PC-3 (cell line): ENCODE measurements at regions of chr5 and their contacts with region 1.

Region 1: DNA sequence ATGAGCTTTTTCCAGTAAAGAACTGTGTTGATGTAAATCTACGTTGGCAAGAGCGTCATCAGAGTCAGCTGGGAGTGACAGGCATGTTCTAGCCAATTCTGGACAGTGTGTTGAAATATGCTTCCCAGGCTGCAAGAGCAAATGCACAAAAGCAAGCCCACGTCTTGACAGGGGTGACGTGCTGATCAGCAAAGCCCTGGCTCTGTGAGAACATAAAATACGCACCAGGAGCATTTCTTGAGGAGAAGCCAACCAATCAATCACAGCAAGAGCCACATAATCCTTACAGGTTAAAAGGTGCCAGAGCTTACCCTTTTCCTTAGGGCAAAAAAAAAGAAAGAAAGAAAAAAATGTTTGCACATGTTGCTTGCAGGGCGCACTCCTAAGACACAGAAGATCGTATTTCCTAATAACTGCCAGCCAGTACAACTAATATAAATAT is 148.1 kb downstream of the PDE4D start:
- DNase-seq: peak; percentile 61
- ATAC-seq: peak; percentile 44
- H3K4me3 ChIP-seq: peak overlapping the region; percentile 48; the same call in 1 of the 2 replicates
- H3K27ac ChIP-seq: peak overlapping the region; percentile 99
- H3K4me1 ChIP-seq: peaks cover 37% of the 10 kb centered on the region
- H3K27me3 ChIP-seq: no peaks in the 10 kb centered on the region
- CTCF ChIP-seq: no peak

Region 2: GRCh38 chr5:59615272-59615671 is 130.2 kb before region 1 on chr5:
- CTCF ChIA-PET with region 1: interaction called, 10 read pairs
- POLR2A ChIA-PET with region 1: no interaction called
- intact Hi-C with region 1: no loop called
- DNase-seq: peak; percentile 58
- ATAC-seq: peak; percentile 73
- H3K4me3 ChIP-seq: no peak overlapping the region
- H3K27ac ChIP-seq: no peak overlapping the region
- H3K4me1 ChIP-seq: peaks cover 15% of the 10 kb centered on the region
- H3K27me3 ChIP-seq: no peaks in the 10 kb centered on the region
- CTCF ChIP-seq: no peak